HepG2 (cell line): ENCODE measurements at regions of chr1 and their contacts with region 1.

Region 1: DNA sequence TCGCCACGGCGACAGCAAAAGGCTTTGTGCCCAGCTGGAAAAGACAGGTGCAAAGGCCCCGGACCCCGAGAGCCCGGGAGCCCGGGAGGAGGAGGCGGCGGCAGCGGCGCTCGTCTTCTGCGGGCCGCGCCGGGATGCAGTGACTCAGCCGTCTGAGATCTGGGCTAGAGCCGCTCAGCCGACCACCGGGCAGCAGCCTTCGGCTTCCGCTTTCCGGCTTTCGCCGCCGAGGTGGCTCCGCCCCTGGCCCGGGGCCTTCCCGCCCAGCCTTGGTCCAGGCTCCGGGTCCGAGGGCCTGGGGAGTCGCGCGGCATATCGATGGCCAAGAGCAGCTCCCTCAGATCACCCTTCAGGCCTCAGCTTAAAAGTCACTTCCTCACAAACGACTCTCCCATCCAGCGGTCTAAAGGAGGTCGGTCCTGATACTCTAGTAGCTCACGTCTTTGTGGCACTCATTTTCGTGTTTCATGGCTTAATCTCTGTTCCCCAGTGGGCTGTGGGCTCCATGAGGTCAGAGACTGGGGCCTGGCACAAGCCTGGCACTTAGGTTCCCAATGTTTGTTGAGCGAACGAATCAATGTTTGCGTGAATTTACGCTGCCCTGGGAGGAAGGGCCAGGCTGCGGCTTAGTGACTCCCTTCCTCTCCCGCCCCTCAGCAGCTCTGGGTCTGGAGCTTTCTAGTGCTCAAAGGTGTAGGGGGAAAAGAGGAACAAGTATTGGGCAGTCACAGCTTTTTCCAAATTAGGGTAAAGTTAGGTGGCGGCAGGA is at the start of gene PHTF1:
- DNase-seq: peak; percentile 52
- ATAC-seq: peak; percentile 92
- H3K4me3 ChIP-seq: peak within 1 kb of the TSS; percentile 85 to 91 (median 91)
- H3K27ac ChIP-seq: peak within 1 kb of the TSS; percentile 98
- H3K4me1 ChIP-seq: peaks cover 35% of the 10 kb centered on the region
- H3K27me3 ChIP-seq: no peaks in the 10 kb centered on the region; a peak in 1 of 5 replicates
- CTCF ChIP-seq: no peak; the same call in 1 of the 2 replicates
- EP300 ChIP-seq: no peak
- POLR2A ChIP-seq: peak; percentile 81 to 91
- RAD21 ChIP-seq: peak; percentile 44; the same call in 1 of the 2 replicates
- total RNA-seq, gene PHTF1: 15.3 and 19.7 TPM in 2 replicates

Region 2: GRCh38 chr1:113784100-113784779 is 24.7 kb after region 1 on chr1:
- CTCF ChIA-PET with region 1: no interaction called
- POLR2A ChIA-PET with region 1: interaction called, 11 read pairs
- in situ Hi-C with region 1: no loop called
- intact Hi-C with region 1: no loop called
- DNase-seq: no peak
- ATAC-seq: no peak
- H3K4me3 ChIP-seq: no peak overlapping the region
- H3K27ac ChIP-seq: no peak overlapping the region
- H3K4me1 ChIP-seq: peaks cover 30% of the 10 kb centered on the region
- H3K27me3 ChIP-seq: no peaks in the 10 kb centered on the region
- CTCF ChIP-seq: no peak
- EP300 ChIP-seq: no peak
- POLR2A ChIP-seq: no peak
- RAD21 ChIP-seq: no peak

Region 3: DNA sequence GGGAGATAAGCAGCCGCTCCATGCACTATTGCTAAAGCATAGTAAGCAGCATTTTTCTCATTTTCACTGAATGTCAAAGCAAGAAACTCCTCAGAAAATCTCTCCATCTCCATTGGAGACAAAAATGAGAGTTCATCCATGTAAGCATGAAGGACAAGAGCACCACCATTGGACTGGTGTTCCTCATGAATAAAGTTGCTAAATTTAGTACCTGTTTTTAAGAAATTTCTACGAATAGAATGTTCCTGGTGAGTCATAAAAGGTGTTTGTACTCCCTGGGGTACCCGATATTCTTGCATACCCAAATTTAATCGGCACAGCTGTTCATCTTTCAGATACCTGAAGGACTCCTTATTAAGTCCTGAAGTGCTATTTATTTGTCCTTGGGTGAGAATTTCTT is 38.0 kb after region 1 on chr1:
- CTCF ChIA-PET with region 1: no interaction called
- POLR2A ChIA-PET with region 1: no interaction called
- in situ Hi-C with region 1: loop called (anchors 5 kb)
- intact Hi-C with region 1: no loop called
- DNase-seq: no peak
- ATAC-seq: no peak
- H3K4me3 ChIP-seq: no peak overlapping the region
- H3K27ac ChIP-seq: no peak overlapping the region
- H3K4me1 ChIP-seq: peaks cover 9% of the 10 kb centered on the region
- H3K27me3 ChIP-seq: no peaks in the 10 kb centered on the region
- CTCF ChIP-seq: no peak
- EP300 ChIP-seq: no peak
- POLR2A ChIP-seq: no peak
- RAD21 ChIP-seq: no peak

Region 4: GRCh38 chr1:113811888-113812660 is 52.6 kb after region 1 on chr1 and contains the start of gene RSBN1:
- CTCF ChIA-PET with region 1: no interaction called
- POLR2A ChIA-PET with region 1: interaction called, 34 read pairs
- in situ Hi-C with region 1: no loop called
- intact Hi-C with region 1: loop called (anchors 1 kb)
- DNase-seq: peak; percentile 97
- ATAC-seq: peak; percentile 98
- H3K4me3 ChIP-seq: peak within 1 kb of the TSS; percentile 76 to 99 (median 88)
- H3K27ac ChIP-seq: peak within 1 kb of the TSS; percentile 83
- H3K4me1 ChIP-seq: peaks cover 28% of the 10 kb centered on the region
- H3K27me3 ChIP-seq: no peaks in the 10 kb centered on the region; a peak in 1 of 5 replicates
- CTCF ChIP-seq: no peak; the same call in 1 of the 2 replicates
- EP300 ChIP-seq: 0 out of 4 replicates have a peak, but pooled peaks of 1 of the 2 experiments have one; percentile 5
- POLR2A ChIP-seq: peak; percentile 68 to 69
- RAD21 ChIP-seq: no peak
- total RNA-seq, gene RSBN1: 10.4 and 13.6 TPM in 2 replicates